Naive thymus-derived CD4-positive, alpha-beta T cell (primary cell): ENCODE measurements at regions of chr17 and their contacts with region 1.

Region 1: DNA sequence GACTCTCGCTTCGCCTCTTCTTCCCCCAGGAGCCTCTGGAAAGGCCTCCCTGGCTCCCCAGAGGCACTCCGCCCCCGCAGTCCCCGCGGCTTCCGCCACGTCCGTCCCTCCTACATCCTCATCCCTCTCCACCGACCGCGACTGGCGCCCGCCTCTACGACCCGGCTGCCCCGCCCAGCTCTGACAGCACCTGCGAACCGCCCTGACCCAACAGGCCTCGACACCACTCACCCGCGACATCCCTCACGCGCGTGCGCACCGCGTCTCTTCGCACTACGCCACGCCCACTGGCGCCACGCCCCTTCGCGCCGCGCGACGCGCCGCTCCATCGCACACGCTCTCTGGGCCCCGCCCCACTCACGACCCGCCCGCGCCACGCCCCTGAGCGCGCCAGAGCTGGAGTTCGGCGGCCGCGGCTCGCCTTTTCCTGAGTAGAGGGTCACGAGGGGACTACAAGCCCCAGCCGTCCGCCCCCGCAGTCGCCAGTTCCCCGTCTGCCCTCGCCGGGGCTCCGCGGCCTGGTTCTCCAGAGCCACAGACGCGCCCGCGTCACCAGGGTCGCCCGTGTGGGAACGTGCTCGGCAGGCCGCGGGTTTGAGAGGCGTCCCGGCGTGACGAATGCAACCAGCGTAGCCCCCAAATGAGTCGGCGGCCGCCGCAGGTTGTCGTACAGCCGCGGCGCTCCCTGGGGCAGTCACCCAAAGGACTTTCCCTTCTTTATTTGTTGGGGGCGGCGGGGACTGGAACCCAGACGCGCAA is 56.2 kb upstream of the LRRC37A3 start:
- DNase-seq: peak; percentile 94 to 99 (median 98)
- ATAC-seq: peak; percentile 92
- H3K4me3 ChIP-seq: peak overlapping the region; percentile 82
- H3K4me3 Mint-ChIP-seq: peak overlapping the region; percentile 88 to 100 (median 96)
- H3K27ac ChIP-seq: peak overlapping the region; percentile 99
- H3K27ac Mint-ChIP-seq: peak overlapping the region; percentile 96 to 100 (median 99)
- H3K4me1 ChIP-seq: peaks cover 8 to 27% of the 10 kb centered on the region in 2 donors
- H3K4me1 Mint-ChIP-seq: peaks cover 19 to 50% (median 33%) of the 10 kb centered on the region in 7 donors
- H3K27me3 ChIP-seq: no peaks in the 10 kb centered on the region
- H3K27me3 Mint-ChIP-seq: no peaks in the 10 kb centered on the region

Region 2: GRCh38 chr17:65027305-65027704 is 51.8 kb after region 1 on chr17:
- CTCF ChIA-PET with region 1: no interaction called
- POLR2A ChIA-PET with region 1: interaction called, 10 read pairs
- intact Hi-C with region 1: loop called in 1 of 2 experiments (anchors 2 kb)
- DNase-seq: peak in 5 of 9 donors; percentile 19 to 68 (median 36)
- ATAC-seq: peak; percentile 82
- H3K4me3 ChIP-seq: no peak overlapping the region
- H3K4me3 Mint-ChIP-seq: peak overlapping the region in 7 of 10 donors; percentile 32 to 73 (median 56)
- H3K27ac ChIP-seq: peak overlapping the region; percentile 8
- H3K27ac Mint-ChIP-seq: peak overlapping the region in 6 of 9 donors; percentile 31 to 85 (median 58)
- H3K4me1 ChIP-seq: peaks cover 49 to 61% of the 10 kb centered on the region in 2 donors
- H3K4me1 Mint-ChIP-seq: peaks cover 54 to 96% (median 86%) of the 10 kb centered on the region in 7 donors
- H3K27me3 ChIP-seq: no peaks in the 10 kb centered on the region
- H3K27me3 Mint-ChIP-seq: no peaks in the 10 kb centered on the region

Region 3: GRCh38 chr17:65039336-65039988 is 64.0 kb after region 1 on chr17:
- CTCF ChIA-PET with region 1: interaction called, 3 read pairs
- POLR2A ChIA-PET with region 1: interaction called, 18 read pairs
- intact Hi-C with region 1: loop called in 1 of 2 experiments (anchors 2 kb)
- DNase-seq: peak in 7 of 9 donors; percentile 55 to 85 (median 77)
- ATAC-seq: peak; percentile 95
- H3K4me3 ChIP-seq: peak overlapping the region; percentile 18
- H3K4me3 Mint-ChIP-seq: peak overlapping the region; percentile 34 to 92 (median 78)
- H3K27ac ChIP-seq: peak overlapping the region; percentile 79
- H3K27ac Mint-ChIP-seq: peak overlapping the region; percentile 78 to 97 (median 93)
- H3K4me1 ChIP-seq: peaks cover 55 to 68% of the 10 kb centered on the region in 2 donors
- H3K4me1 Mint-ChIP-seq: peaks cover 67 to 90% (median 83%) of the 10 kb centered on the region in 7 donors
- H3K27me3 ChIP-seq: no peaks in the 10 kb centered on the region
- H3K27me3 Mint-ChIP-seq: no peaks in the 10 kb centered on the region

Region 4: GRCh38 chr17:65047942-65048341 is 72.4 kb after region 1 on chr17:
- CTCF ChIA-PET with region 1: no interaction called
- POLR2A ChIA-PET with region 1: interaction called, 11 read pairs
- intact Hi-C with region 1: no loop called
- DNase-seq: no peak
- ATAC-seq: peak; percentile 86
- H3K4me3 ChIP-seq: no peak overlapping the region
- H3K4me3 Mint-ChIP-seq: peak overlapping the region in 8 of 10 donors; percentile 11 to 65 (median 52)
- H3K27ac ChIP-seq: peak overlapping the region; percentile 24
- H3K27ac Mint-ChIP-seq: peak overlapping the region; percentile 2 to 87 (median 67)
- H3K4me1 ChIP-seq: peaks cover 36 to 44% of the 10 kb centered on the region in 2 donors
- H3K4me1 Mint-ChIP-seq: peaks cover 42 to 90% (median 73%) of the 10 kb centered on the region in 7 donors
- H3K27me3 ChIP-seq: no peaks in the 10 kb centered on the region
- H3K27me3 Mint-ChIP-seq: no peaks in the 10 kb centered on the region

Region 5: GRCh38 chr17:65122836-65123756 is 147.6 kb after region 1 on chr17:
- CTCF ChIA-PET with region 1: no interaction called
- POLR2A ChIA-PET with region 1: interaction called, 3 read pairs
- intact Hi-C with region 1: loop called in 1 of 2 experiments (anchors 2 kb)
- DNase-seq: peak; percentile 60 to 91 (median 84)
- ATAC-seq: peak; percentile 98
- H3K4me3 ChIP-seq: peak overlapping the region; percentile 43
- H3K4me3 Mint-ChIP-seq: peak overlapping the region; percentile 74 to 95 (median 92)
- H3K27ac ChIP-seq: peak overlapping the region; percentile 74
- H3K27ac Mint-ChIP-seq: peak overlapping the region; percentile 88 to 99 (median 98)
- H3K4me1 ChIP-seq: peaks cover 0 to 3% of the 10 kb centered on the region in 2 donors
- H3K4me1 Mint-ChIP-seq: peaks cover 9 to 32% (median 10%) of the 10 kb centered on the region in 7 donors
- H3K27me3 ChIP-seq: no peaks in the 10 kb centered on the region
- H3K27me3 Mint-ChIP-seq: peaks cover 0 to 12% (median 4%) of the 10 kb centered on the region in 5 donors

Region 6: DNA sequence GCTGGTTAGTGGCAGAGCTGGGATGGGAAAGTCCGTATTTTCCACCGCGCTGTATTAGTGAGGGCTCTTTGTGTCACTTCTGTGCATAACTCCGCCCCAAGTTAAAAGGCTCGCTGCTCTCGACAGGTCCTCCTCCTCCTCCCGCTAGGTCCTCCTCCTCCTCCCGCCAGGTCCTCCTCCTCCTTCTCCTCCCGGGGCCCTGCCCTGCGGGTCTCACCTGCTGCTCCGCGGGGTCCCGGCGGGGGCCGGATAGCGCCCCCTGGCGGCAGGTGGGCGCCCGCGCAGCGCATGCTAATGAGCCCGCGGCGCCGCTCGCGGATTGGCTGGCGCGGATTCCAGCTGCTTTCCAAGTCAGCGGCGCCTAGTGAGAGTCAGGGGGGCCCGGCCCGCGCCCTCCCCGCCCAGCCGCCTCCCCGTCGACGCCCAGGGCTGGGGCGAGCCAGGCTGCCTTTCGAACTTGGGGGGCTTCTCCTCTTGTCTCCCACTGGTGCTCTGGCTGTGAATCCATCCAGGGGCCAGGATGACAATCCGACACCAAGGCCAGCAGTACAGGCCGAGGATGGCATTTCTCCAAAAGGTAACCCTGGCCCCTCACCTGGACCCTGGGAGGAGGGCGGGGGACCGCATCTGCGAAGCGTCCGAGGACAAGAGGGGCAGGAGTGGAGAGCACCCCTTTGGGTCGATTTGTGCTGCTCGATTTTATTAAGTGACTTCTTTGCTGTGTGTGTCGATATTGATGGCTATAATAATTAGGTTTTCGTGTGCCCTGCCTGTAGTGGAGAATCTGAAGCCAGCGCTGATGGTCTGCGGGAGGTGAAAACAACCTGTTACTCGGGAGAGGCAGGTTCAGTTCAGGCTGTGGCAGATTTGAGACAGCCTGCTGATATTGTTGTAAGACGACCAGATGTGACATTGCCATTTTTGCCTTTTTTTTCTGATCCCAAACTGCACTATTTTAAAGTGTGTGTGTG is 161.8 kb after region 1 on chr17 and contains the start of gene RGS9:
- CTCF ChIA-PET with region 1: no interaction called
- POLR2A ChIA-PET with region 1: no interaction called
- intact Hi-C with region 1: loop called in 1 of 2 experiments (anchors 5 kb)
- DNase-seq: peak; percentile 77 to 90 (median 86)
- ATAC-seq: peak; percentile 99
- H3K4me3 ChIP-seq: peak within 1 kb of the TSS; percentile 69
- H3K4me3 Mint-ChIP-seq: peak within 1 kb of the TSS; percentile 67 to 91 (median 82)
- H3K27ac ChIP-seq: peak within 1 kb of the TSS; percentile 56
- H3K27ac Mint-ChIP-seq: peak within 1 kb of the TSS; percentile 45 to 87 (median 75)
- H3K4me1 ChIP-seq: peaks cover 12 to 27% of the 10 kb centered on the region in 2 donors
- H3K4me1 Mint-ChIP-seq: peaks cover 10 to 40% (median 22%) of the 10 kb centered on the region in 7 donors
- H3K27me3 ChIP-seq: no peaks in the 10 kb centered on the region
- H3K27me3 Mint-ChIP-seq: peaks cover 8 to 31% (median 18%) of the 10 kb centered on the region in 5 donors
- total RNA-seq, gene RGS9: 0.32 to 3.9 (median 0.81) TPM

Region 7: GRCh38 chr17:65198653-65199382 is 223.3 kb after region 1 on chr17:
- CTCF ChIA-PET with region 1: no interaction called
- POLR2A ChIA-PET with region 1: no interaction called
- intact Hi-C with region 1: no loop called
- DNase-seq: peak in 7 of 9 donors; percentile 36 to 67 (median 57)
- ATAC-seq: peak; percentile 79
- H3K4me3 ChIP-seq: no peak overlapping the region
- H3K4me3 Mint-ChIP-seq: no peak overlapping the region
- H3K27ac ChIP-seq: no peak overlapping the region
- H3K27ac Mint-ChIP-seq: no peak overlapping the region
- H3K4me1 ChIP-seq: no peaks in the 10 kb centered on the region
- H3K4me1 Mint-ChIP-seq: peaks cover 0 to 6% (median 0%) of the 10 kb centered on the region in 7 donors
- H3K27me3 ChIP-seq: no peaks in the 10 kb centered on the region
- H3K27me3 Mint-ChIP-seq: peaks cover 0 to 6% (median 0%) of the 10 kb centered on the region in 5 donors